ENCODE measurements at regions of chr1 and their contacts with region 1.

Region 1: DNA sequence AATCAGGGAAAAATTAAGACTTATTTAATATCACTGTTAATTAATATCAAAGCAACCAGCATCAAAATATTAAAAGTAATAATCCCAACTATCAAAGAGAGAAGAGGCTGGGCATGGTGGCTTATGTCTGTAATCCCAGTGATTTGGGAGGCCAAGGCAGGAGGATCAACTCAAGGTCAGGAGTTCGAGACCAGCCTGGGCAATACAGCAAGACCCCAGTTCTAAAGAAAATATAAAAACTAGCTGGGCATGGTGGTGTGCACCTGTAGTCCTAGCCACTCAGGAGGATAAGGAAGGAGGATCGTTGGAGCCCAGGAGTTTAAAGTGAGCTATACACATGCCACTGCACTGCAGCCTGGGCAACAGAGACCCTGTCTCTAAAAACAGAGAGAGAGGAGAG is 43.2 kb downstream of the AHCTF1 start:
- DNase-seq: no peak
- H3K4me3 ChIP-seq: no peak overlapping the region
- H3K27ac ChIP-seq: no peak overlapping the region
- H3K4me1 ChIP-seq: no peaks in the 10 kb centered on the region
- H3K27me3 ChIP-seq: no peaks in the 10 kb centered on the region
- CTCF ChIP-seq: no peak

Region 2: GRCh38 chr1:246608616-246609376 is 279.7 kb before region 1 on chr1:
- CTCF ChIA-PET with region 1: no interaction called
- POLR2A ChIA-PET with region 1: no interaction called
- intact Hi-C with region 1: no loop called
- DNase-seq: peak; percentile 91 to 96
- H3K4me3 ChIP-seq: no peak overlapping the region
- H3K27ac ChIP-seq: peak overlapping the region; percentile 81
- H3K4me1 ChIP-seq: peaks cover 15% of the 10 kb centered on the region
- H3K27me3 ChIP-seq: no peaks in the 10 kb centered on the region
- CTCF ChIP-seq: no peak

Region 3: DNA sequence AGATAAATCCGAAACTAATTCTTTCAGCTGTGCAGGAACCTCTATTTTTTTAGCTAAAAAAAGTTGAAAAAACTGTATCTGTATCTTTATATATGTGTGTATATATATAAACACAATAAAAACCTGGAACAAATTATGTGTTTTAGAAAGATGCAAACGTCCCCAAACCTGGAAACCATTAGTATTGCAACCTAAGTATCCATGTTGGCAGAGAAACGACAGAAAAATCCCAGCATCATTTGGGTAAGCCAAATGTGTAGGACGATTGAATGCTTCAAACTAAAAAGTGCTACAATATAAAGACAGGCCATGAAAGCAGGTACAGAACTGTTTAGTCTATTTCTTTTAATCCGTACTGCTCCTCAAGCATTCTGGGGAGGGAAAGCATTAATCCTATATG is 44.6 kb before region 1 on chr1:
- CTCF ChIA-PET with region 1: no interaction called
- POLR2A ChIA-PET with region 1: no interaction called
- intact Hi-C with region 1: loop called (anchors 5 kb)
- DNase-seq: no peak
- H3K4me3 ChIP-seq: no peak overlapping the region
- H3K27ac ChIP-seq: no peak overlapping the region
- H3K4me1 ChIP-seq: no peaks in the 10 kb centered on the region
- H3K27me3 ChIP-seq: no peaks in the 10 kb centered on the region
- CTCF ChIP-seq: no peak